AG04450 (cell line): ENCODE measurements at regions of chr5 and their contacts with region 1.

Region 1: DNA sequence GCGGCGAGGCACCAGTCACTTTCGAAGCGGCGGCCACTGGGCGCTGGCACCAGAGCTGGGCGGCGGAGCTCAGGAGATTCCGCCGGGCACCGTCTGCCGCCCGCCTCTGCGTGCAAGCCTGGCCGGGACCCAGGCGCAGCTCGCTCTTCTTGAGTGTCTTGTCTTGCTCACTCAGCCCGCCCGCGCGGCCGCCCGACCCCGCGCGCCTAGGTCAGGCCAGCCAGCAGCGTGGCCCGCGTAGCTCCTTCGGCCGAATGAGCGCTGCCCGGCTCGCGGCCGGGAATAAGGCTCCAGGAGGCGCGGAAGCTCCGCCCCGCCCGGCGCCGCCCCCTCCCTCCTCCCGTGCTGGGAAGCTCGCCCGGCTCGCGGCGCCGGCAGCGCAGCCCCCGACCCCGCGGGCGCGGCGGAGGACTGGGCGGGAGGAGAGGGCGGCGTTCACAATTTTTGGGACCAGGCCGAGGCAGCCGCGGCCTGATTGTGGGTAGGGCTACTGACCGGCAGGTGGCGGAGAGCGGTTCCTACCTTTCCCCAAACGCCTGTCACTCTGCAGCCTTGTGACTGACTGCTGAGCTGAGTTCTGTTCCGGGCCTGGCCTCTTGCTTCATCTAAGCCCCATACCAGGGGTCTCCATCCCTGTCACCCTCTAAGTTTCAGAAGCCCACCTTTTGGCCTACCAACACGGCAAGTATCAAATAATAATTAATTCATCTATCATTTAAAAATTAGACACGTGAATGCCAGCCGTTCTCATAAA is at the start of gene HBEGF:
- DNase-seq: no peak
- H3K4me3 ChIP-seq: peak within 1 kb of the TSS; percentile 78
- H3K27ac ChIP-seq: no peak within 1 kb of the TSS
- H3K27me3 ChIP-seq: no peaks in the 10 kb centered on the region
- CTCF ChIP-seq: peak; percentile 49
- polyA plus RNA-seq, gene HBEGF: 6.6 and 7.0 TPM in 2 replicates

Region 2: GRCh38 chr5:138922494-138922893 is 1424.0 kb before region 1 on chr5:
- CTCF ChIA-PET with region 1: no interaction called
- POLR2A ChIA-PET with region 1: no interaction called
- DNase-seq: no peak
- H3K4me3 ChIP-seq: no peak overlapping the region
- H3K27ac ChIP-seq: no peak overlapping the region
- H3K27me3 ChIP-seq: no peaks in the 10 kb centered on the region
- CTCF ChIP-seq: no peak

Region 3: DNA sequence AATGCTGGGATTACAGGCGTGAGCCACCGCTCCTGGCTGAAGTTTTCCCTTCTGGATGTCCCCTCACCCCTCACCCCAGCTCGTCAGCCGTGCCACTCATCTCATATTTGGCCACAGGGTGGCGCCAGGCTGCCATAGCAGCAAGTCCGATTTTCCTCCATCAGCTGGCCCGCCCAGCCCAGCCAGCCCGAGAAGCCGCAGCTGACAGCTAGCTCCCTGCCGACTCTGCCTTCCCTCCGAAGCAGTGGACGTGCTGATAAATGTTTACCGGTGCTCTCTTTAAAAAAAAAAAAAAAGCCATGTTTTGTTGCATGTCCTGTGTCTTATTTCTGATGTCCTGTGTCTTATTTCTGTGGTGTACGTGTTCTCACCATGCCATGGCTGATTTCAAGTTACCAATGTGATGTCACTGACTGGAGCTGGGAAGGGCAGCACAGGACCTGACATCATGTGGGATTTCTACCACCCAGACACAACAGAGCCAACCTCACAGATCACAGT is 102.0 kb before region 1 on chr5:
- CTCF ChIA-PET with region 1: interaction called, 806 read pairs
- POLR2A ChIA-PET with region 1: interaction called, 62 read pairs
- DNase-seq: peak; percentile 79
- H3K4me3 ChIP-seq: no peak overlapping the region
- H3K27ac ChIP-seq: peak overlapping the region; percentile 52
- H3K27me3 ChIP-seq: no peaks in the 10 kb centered on the region
- CTCF ChIP-seq: peak; percentile 90

Region 4: GRCh38 chr5:140295414-140295813 is 51.1 kb before region 1 on chr5:
- CTCF ChIA-PET with region 1: interaction called, 13 read pairs
- POLR2A ChIA-PET with region 1: interaction called, 11 read pairs
- DNase-seq: peak; percentile 90
- H3K4me3 ChIP-seq: no peak overlapping the region
- H3K27ac ChIP-seq: no peak overlapping the region
- H3K27me3 ChIP-seq: no peaks in the 10 kb centered on the region
- CTCF ChIP-seq: no peak

Region 5: GRCh38 chr5:140336388-140336787 is 10.1 kb before region 1 on chr5:
- CTCF ChIA-PET with region 1: interaction called, 34 read pairs
- POLR2A ChIA-PET with region 1: interaction called, 11 read pairs
- DNase-seq: no peak
- H3K4me3 ChIP-seq: no peak overlapping the region
- H3K27ac ChIP-seq: no peak overlapping the region
- H3K27me3 ChIP-seq: no peaks in the 10 kb centered on the region
- CTCF ChIP-seq: no peak

Region 6: DNA sequence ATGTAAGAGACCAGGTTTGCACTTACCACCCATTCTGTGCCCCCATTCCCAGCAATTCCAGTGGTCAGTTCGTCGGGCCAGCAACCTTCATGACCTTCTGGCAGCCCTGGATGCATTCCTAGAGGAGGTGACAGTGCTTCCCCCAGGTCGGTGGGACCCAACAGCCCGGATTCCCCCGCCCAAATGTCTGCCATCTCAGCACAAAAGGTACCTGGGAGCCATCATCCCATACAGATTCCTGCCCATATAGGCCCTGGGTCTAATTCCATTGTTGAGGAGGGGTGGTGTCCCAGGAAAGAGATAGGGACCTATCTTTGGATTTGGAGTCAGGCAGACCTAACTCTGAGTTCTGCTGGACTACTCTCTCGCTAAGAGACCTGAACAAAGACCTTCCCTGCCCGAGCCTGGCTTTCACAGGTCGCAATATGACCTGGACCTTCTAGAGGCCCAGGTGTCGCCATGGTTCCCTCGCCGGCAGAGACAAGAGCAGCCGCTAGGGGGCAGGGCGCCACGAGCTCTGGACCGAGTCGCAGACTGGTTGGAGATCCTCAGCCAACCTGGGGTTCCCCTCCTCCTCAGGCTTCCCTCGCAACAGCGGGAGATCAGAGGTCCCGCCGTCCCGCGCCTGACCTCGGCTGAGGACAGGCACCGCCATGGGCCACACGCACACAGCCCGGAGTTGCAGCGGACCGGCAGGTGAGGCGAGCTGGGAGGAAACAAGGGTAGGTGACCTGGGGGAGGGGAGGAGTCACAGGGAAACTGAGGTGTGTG is 16.5 kb after region 1 on chr5:
- CTCF ChIA-PET with region 1: interaction called, 25 read pairs
- POLR2A ChIA-PET with region 1: interaction called, 6 read pairs
- DNase-seq: no peak
- H3K4me3 ChIP-seq: peak overlapping the region; percentile 47
- H3K27ac ChIP-seq: no peak overlapping the region
- H3K27me3 ChIP-seq: peaks cover 9% of the 10 kb centered on the region
- CTCF ChIP-seq: peak; percentile 90